ENCODE measurements at regions of chr7 and their contacts with region 1.

Region 1: GRCh38 chr7:79504712-79505389 is 51.4 kb upstream of the MAGI2 start:
- DNase-seq: no peak
- ATAC-seq: no peak
- H3K4me3 ChIP-seq: no peak overlapping the region
- H3K4me3 Mint-ChIP-seq: no peak overlapping the region
- H3K27ac ChIP-seq: no peak overlapping the region
- H3K27ac Mint-ChIP-seq: no peak overlapping the region
- H3K4me1 ChIP-seq: no peaks in the 10 kb centered on the region
- H3K4me1 Mint-ChIP-seq: no peaks in the 10 kb centered on the region
- H3K27me3 ChIP-seq: no peaks in the 10 kb centered on the region
- H3K27me3 Mint-ChIP-seq: no peaks in the 10 kb centered on the region
- CTCF ChIP-seq: no peak

Region 2: GRCh38 chr7:79453558-79454360 is 51.1 kb before region 1 on chr7 and contains the start of gene MAGI2:
- CTCF ChIA-PET with region 1: no interaction called
- POLR2A ChIA-PET with region 1: no interaction called
- intact Hi-C with region 1: loop called in 1 of 2 experiments (anchors 2 kb)
- DNase-seq: peak in 2 of 14 experiments; percentile 3 to 4
- ATAC-seq: no peak
- H3K4me3 ChIP-seq: no peak within 1 kb of the TSS
- H3K4me3 Mint-ChIP-seq: no peak within 1 kb of the TSS
- H3K27ac ChIP-seq: no peak within 1 kb of the TSS
- H3K27ac Mint-ChIP-seq: no peak within 1 kb of the TSS
- H3K4me1 ChIP-seq: no peaks in the 10 kb centered on the region
- H3K4me1 Mint-ChIP-seq: no peaks in the 10 kb centered on the region
- H3K27me3 ChIP-seq: peaks cover 21 to 30% of the 10 kb centered on the region in 2 experiments
- H3K27me3 Mint-ChIP-seq: peaks cover 60% of the 10 kb centered on the region
- CTCF ChIP-seq: no peak
- total RNA-seq, gene MAGI2: not detected

Region 3: DNA sequence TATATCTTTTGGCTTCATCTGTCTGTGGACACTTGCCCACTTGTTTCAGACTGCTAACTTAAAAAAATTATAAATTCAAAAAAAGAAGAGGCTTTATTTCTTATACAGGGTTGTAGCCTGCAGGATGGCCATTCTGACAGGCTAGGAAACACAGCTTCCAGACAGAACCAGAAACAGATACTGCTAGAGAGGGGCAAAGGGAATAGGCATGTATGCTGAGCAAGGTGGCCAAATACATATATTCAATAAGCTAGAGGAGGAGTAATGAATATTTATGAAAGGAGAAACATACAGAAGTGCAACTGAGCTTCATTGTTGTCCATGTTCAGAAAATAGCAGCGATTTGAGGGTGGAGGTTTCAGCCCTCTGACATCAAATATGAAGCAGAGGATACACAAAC is 29.4 kb before region 1 on chr7:
- CTCF ChIA-PET with region 1: no interaction called
- POLR2A ChIA-PET with region 1: no interaction called
- intact Hi-C with region 1: no loop called
- DNase-seq: no peak
- ATAC-seq: no peak
- H3K4me3 ChIP-seq: no peak overlapping the region
- H3K4me3 Mint-ChIP-seq: no peak overlapping the region
- H3K27ac ChIP-seq: no peak overlapping the region
- H3K27ac Mint-ChIP-seq: no peak overlapping the region
- H3K4me1 ChIP-seq: no peaks in the 10 kb centered on the region
- H3K4me1 Mint-ChIP-seq: no peaks in the 10 kb centered on the region
- H3K27me3 ChIP-seq: no peaks in the 10 kb centered on the region
- H3K27me3 Mint-ChIP-seq: no peaks in the 10 kb centered on the region
- CTCF ChIP-seq: no peak

Region 4: DNA sequence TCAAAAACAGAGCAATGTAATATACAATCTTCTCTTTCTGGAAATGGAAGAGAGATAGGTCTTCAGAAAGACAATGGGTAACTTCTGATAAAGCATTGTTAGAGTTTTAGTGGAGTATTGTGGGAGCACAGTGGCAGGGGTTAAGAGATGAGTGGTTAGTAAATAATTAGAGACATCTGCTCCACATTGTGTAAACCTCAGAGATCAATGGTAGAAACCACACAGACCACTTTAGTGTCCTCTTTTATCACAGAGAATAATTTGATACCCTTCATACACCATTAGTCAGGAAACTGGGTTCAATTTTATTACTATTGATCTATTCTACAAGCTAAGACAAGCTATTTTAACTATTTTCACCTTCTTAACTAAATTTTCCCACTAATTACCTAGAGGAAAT is 15.5 kb before region 1 on chr7:
- CTCF ChIA-PET with region 1: no interaction called
- POLR2A ChIA-PET with region 1: no interaction called
- intact Hi-C with region 1: no loop called
- DNase-seq: no peak
- ATAC-seq: no peak
- H3K4me3 ChIP-seq: no peak overlapping the region
- H3K4me3 Mint-ChIP-seq: no peak overlapping the region
- H3K27ac ChIP-seq: no peak overlapping the region
- H3K27ac Mint-ChIP-seq: no peak overlapping the region
- H3K4me1 ChIP-seq: no peaks in the 10 kb centered on the region
- H3K4me1 Mint-ChIP-seq: no peaks in the 10 kb centered on the region
- H3K27me3 ChIP-seq: no peaks in the 10 kb centered on the region
- H3K27me3 Mint-ChIP-seq: no peaks in the 10 kb centered on the region
- CTCF ChIP-seq: no peak